A549 (cell line): ENCODE measurements at regions of chr15 and their contacts with region 1.

Region 1: DNA sequence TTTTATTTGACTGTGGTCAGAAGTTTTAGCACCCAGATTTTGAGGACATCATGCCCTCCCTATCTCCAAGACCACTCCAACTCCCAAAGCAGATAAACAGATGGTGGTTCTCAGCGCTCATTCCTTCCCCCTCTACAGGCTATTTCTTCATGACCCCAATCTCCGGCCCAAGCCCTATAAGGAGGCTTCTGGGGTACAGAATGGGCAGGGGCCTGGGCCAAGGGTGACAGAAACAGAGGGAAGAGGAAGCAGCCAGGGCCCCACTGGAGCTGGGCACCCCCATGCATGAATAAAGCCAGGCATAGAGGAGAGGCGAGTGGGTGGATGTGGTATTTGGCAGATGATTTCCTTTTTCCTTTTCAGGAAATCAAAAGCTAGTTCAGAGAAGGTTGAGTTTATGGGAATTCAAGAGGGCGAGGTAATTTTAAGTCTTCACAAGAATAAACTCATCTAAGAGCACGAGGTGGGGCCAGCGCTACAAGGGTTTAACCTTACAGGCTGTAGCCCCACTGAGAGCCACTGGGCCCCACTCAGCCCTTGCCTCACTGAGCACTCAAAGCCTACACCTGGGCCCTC is 104.8 kb upstream of the HERC1 start:
- DNase-seq: no peak
- ATAC-seq: no peak
- H3K4me3 ChIP-seq: no peak overlapping the region
- H3K27ac ChIP-seq: no peak overlapping the region
- H3K4me1 ChIP-seq: 0 out of 3 replicates have a peak, but pooled peaks cover under 1% of the 10 kb centered on the region
- CTCF ChIP-seq: no peak
- EP300 ChIP-seq: no peak
- POLR2A ChIP-seq: no peak
- RAD21 ChIP-seq: no peak

Region 2: GRCh38 chr15:63735449-63735848 is 203.1 kb before region 1 on chr15:
- CTCF ChIA-PET with region 1: no interaction called
- POLR2A ChIA-PET with region 1: no interaction called
- DNase-seq: no peak
- ATAC-seq: no peak
- H3K4me3 ChIP-seq: no peak overlapping the region
- H3K27ac ChIP-seq: no peak overlapping the region
- H3K4me1 ChIP-seq: no peaks in the 10 kb centered on the region
- CTCF ChIP-seq: no peak
- EP300 ChIP-seq: no peak
- POLR2A ChIP-seq: no peak
- RAD21 ChIP-seq: no peak

Region 3: GRCh38 chr15:63950911-63951481 is 12.4 kb after region 1 on chr15:
- CTCF ChIA-PET with region 1: interaction called, 50 read pairs
- POLR2A ChIA-PET with region 1: no interaction called
- DNase-seq: no peak
- ATAC-seq: no peak; a peak in 2 of 6 replicates
- H3K4me3 ChIP-seq: no peak overlapping the region
- H3K27ac ChIP-seq: no peak overlapping the region
- H3K4me1 ChIP-seq: peaks cover 6% of the 10 kb centered on the region; the same call in 2 of the 3 replicates
- CTCF ChIP-seq: no peak
- EP300 ChIP-seq: no peak
- POLR2A ChIP-seq: no peak
- RAD21 ChIP-seq: no peak